Activated CD4-positive, alpha-beta T cell treated with anti-CD3 and anti-CD28 coated beads, Interleukin-2, amount 10 ng/mL, durations not matched to agents 24 days and 14 days (primary cell): ENCODE measurements at regions of chr2 and their contacts with region 1.

Region 1: DNA sequence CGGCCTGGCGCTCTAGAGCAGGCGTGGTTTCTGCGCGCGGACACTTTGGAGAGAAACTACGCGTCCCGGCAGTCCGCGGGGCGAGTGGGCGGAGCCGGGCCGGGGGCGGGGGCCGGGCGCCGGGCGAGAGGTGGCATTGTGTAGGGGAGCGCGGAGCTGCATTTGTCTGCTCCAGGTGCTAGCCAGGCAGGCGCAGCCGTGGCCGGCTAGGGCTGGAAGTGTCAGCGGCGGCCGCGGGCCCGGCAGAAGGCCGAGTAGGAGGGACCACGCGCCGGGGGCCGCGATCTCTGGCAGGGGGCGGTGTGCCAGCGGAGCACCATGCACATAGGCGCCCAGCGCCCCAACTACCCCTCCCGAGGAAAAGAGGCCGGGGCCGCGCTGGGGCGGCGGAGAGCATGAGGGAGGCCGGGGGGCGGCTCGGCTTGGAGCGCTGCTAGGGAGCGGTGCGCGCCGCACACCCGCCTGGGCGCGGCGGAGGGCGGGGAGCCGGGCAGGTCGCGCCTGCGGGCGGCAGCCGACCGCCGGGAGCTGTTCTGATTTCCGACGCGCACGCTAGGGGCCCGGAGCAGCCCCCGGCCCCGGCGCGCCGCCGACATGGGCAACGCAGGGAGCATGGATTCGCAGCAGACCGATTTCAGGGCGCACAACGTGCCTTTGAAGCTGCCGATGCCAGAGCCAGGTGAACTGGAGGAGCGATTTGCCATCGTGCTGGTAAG is at the start of gene FMNL2:
- DNase-seq: peak; percentile 90
- H3K4me3 Mint-ChIP-seq: peak within 1 kb of the TSS; percentile 84
- H3K27ac Mint-ChIP-seq: peak within 1 kb of the TSS; percentile 18
- H3K4me1 Mint-ChIP-seq: peaks cover 11% of the 10 kb centered on the region
- H3K27me3 Mint-ChIP-seq: peaks cover 47% of the 10 kb centered on the region
- total RNA-seq, gene FMNL2: 13.5 and 14.9 TPM in 2 replicates

Region 2: DNA sequence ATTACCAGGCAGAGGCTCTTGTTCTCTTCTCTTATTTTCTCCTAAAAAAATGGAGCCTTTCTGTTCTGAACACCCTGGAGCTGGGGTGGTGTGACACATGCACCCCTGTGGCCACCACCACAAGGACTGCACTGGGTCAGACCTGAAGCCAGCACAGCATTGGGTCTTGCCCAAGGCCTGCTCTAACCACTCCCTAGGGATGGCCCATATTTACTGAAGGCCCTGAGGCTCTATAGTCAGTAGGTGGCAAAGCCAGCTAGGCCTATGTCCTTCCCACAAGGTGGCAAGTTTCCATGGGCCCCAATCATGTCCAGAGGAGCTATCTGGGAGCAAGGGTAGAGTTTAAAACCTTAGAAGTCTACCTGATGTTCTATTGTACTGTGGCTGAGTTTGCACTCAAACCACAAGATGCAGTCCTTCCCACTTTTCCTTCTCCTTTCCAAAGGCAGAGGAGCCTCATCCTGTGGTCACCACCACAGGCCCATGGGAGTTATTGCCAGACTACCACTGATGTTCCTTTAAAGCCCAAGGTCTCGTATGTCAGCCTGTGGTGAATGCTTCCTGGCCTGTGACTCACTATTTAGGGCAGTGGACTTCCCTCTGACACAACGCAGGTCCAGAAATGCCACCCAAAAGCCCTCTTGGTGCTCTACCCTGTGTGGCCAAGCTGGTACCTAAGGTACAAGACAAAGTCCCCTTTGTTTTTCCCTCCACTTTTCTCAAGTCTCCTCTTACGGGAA is 15.2 kb before region 1 on chr2:
- intact Hi-C with region 1: no loop called
- DNase-seq: no peak
- H3K4me3 Mint-ChIP-seq: no peak overlapping the region
- H3K27ac Mint-ChIP-seq: no peak overlapping the region
- H3K4me1 Mint-ChIP-seq: no peaks in the 10 kb centered on the region
- H3K27me3 Mint-ChIP-seq: peaks cover 16% of the 10 kb centered on the region

Region 3: GRCh38 chr2:152367547-152368390 is 32.6 kb after region 1 on chr2:
- intact Hi-C with region 1: no loop called
- DNase-seq: no peak
- H3K4me3 Mint-ChIP-seq: no peak overlapping the region
- H3K27ac Mint-ChIP-seq: no peak overlapping the region
- H3K4me1 Mint-ChIP-seq: peaks cover 2% of the 10 kb centered on the region
- H3K27me3 Mint-ChIP-seq: peaks cover 10% of the 10 kb centered on the region

Region 4: GRCh38 chr2:152407204-152407721 is 72.1 kb after region 1 on chr2:
- intact Hi-C with region 1: loop called (anchors 2 kb)
- DNase-seq: peak; percentile 81
- H3K4me3 Mint-ChIP-seq: peak overlapping the region; percentile 78
- H3K27ac Mint-ChIP-seq: peak overlapping the region; percentile 91
- H3K4me1 Mint-ChIP-seq: peaks cover 54% of the 10 kb centered on the region
- H3K27me3 Mint-ChIP-seq: no peaks in the 10 kb centered on the region

Region 5: DNA sequence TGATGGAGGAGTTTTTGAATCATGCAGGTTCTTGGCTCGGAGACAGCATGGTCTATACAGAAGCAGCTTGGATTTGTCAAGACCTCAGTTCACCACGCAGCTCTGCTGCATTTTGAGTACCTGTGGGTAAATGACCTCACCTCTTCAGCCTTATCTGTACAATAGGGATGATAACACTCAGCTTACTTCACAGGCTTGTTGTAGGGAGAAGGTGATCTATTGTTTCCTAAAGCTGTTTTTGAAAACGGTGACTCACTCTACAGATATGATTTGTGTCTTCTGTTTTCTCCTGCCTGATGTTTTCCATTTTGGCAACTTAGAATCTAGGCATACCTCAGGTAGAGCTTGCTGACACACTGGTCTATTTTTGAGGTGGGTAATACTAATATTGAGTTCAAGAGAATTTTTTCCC is 80.1 kb after region 1 on chr2:
- intact Hi-C with region 1: loop called (anchors 1 kb)
- DNase-seq: peak; percentile 59
- H3K4me3 Mint-ChIP-seq: peak overlapping the region; percentile 24
- H3K27ac Mint-ChIP-seq: peak overlapping the region; percentile 87
- H3K4me1 Mint-ChIP-seq: peaks cover 31% of the 10 kb centered on the region
- H3K27me3 Mint-ChIP-seq: no peaks in the 10 kb centered on the region

Region 6: GRCh38 chr2:152421521-152422370 is 86.6 kb after region 1 on chr2:
- intact Hi-C with region 1: loop called (anchors 1 kb)
- DNase-seq: peak; percentile 60
- H3K4me3 Mint-ChIP-seq: no peak overlapping the region
- H3K27ac Mint-ChIP-seq: peak overlapping the region; percentile 38
- H3K4me1 Mint-ChIP-seq: peaks cover 18% of the 10 kb centered on the region
- H3K27me3 Mint-ChIP-seq: peaks cover 1% of the 10 kb centered on the region

Region 7: DNA sequence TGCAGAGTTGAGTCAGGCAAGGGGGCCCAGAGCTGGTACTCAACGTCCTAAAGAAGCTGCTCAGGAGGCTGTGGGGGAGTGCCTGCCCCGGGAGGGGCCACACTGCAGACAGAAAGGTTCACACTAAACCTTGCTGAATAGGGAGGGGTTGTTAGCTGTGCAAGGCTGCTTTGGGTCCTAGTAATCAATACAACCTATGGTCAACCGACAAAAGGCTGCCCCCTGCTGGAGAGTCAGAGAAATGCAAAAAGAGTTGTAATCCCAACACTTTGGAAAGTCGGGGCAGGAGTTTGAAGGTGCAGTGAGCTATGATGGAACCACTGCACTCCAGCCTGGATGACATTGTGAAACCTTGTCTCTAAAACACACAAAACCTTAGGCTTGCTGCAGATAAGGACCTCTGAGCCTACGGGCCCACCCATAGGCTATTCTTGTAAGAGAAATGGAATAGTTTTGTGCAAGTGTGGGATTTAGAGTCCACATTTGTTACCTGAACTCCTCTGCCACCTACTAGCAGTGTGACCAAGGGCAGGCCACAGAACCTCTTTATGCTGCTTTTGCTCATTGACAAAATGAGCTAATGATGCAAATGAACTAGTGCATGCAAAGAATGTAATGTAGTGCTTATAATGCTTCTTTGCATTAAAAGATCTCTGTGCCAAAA is 300.6 kb after region 1 on chr2:
- intact Hi-C with region 1: loop called (anchors 1 kb)
- DNase-seq: peak; percentile 91
- H3K4me3 Mint-ChIP-seq: no peak overlapping the region
- H3K27ac Mint-ChIP-seq: no peak overlapping the region
- H3K4me1 Mint-ChIP-seq: no peaks in the 10 kb centered on the region
- H3K27me3 Mint-ChIP-seq: no peaks in the 10 kb centered on the region